ENCODE measurements at regions of chr1 and their contacts with region 1.

Region 1: GRCh38 chr1:154198756-154199562 is 7.1 kb upstream of the TPM3 start:
- DNase-seq: peak; percentile 70
- ATAC-seq: peak; percentile 76
- H3K4me3 Mint-ChIP-seq: no peak overlapping the region
- H3K27ac Mint-ChIP-seq: no peak overlapping the region
- H3K4me1 Mint-ChIP-seq: peaks cover 5% of the 10 kb centered on the region
- H3K27me3 Mint-ChIP-seq: peaks cover 12% of the 10 kb centered on the region

Region 2: DNA sequence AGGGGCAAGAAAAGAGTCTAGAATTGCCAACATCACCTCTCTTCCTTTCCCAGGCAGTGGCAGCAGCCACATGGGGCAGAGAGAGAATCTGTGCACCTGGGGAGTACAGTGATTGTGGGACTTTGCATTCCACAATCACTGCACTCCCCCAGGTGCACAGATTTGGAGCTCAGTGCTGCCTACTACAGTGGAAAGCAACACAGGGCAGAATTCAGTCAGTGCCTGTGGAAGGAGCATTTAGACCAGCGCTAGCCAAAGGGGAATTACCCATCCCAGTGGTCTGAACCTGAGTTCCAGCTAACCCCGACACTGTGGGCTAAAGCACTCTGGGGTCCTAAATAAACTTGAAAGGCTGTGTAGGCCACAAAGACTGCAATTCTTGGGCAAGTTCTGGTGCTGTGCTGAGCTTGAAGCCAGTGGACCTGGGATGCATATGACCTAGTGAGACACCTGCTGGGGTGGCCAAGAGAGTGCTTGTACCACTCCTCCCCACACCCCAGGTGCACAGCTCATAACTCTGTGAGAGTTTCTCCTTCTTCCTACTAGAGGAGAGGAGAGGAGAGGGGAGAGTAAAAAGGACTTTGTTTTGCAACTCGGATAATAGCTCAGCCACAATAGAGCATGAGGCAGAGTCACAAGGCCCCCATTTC is 94.4 kb before region 1 on chr1:
- CTCF ChIA-PET with region 1: no interaction called
- POLR2A ChIA-PET with region 1: no interaction called
- DNase-seq: no peak
- ATAC-seq: no peak
- H3K4me3 Mint-ChIP-seq: no peak overlapping the region
- H3K27ac Mint-ChIP-seq: no peak overlapping the region
- H3K4me1 Mint-ChIP-seq: no peaks in the 10 kb centered on the region
- H3K27me3 Mint-ChIP-seq: no peaks in the 10 kb centered on the region

Region 3: GRCh38 chr1:154170547-154171222 is 28.3 kb before region 1 on chr1:
- CTCF ChIA-PET with region 1: no interaction called
- POLR2A ChIA-PET with region 1: no interaction called
- DNase-seq: no peak
- ATAC-seq: peak; percentile 50
- H3K4me3 Mint-ChIP-seq: no peak overlapping the region
- H3K27ac Mint-ChIP-seq: peak overlapping the region; percentile 43
- H3K4me1 Mint-ChIP-seq: peaks cover 34% of the 10 kb centered on the region
- H3K27me3 Mint-ChIP-seq: no peaks in the 10 kb centered on the region

Region 4: GRCh38 chr1:154183045-154183915 is 15.7 kb before region 1 on chr1:
- CTCF ChIA-PET with region 1: interaction called, 14 read pairs
- POLR2A ChIA-PET with region 1: interaction called, 5 read pairs
- DNase-seq: peak; percentile 97
- ATAC-seq: peak; percentile 72
- H3K4me3 Mint-ChIP-seq: peak overlapping the region; percentile 99
- H3K27ac Mint-ChIP-seq: peak overlapping the region; percentile 100
- H3K4me1 Mint-ChIP-seq: peaks cover 43% of the 10 kb centered on the region
- H3K27me3 Mint-ChIP-seq: peaks cover 6% of the 10 kb centered on the region

Region 5: GRCh38 chr1:154213274-154213673 is 14.3 kb after region 1 on chr1:
- CTCF ChIA-PET with region 1: interaction called, 39 read pairs
- POLR2A ChIA-PET with region 1: interaction called, 5 read pairs
- DNase-seq: no peak
- ATAC-seq: no peak
- H3K4me3 Mint-ChIP-seq: no peak overlapping the region
- H3K27ac Mint-ChIP-seq: no peak overlapping the region
- H3K4me1 Mint-ChIP-seq: peaks cover 25% of the 10 kb centered on the region
- H3K27me3 Mint-ChIP-seq: no peaks in the 10 kb centered on the region

Region 6: GRCh38 chr1:154220071-154220969 is 21.4 kb after region 1 on chr1 and contains the start of gene UBAP2L:
- CTCF ChIA-PET with region 1: interaction called, 39 read pairs
- POLR2A ChIA-PET with region 1: interaction called, 5 read pairs
- DNase-seq: peak; percentile 99
- ATAC-seq: peak; percentile 88
- H3K4me3 Mint-ChIP-seq: peak within 1 kb of the TSS; percentile 99
- H3K27ac Mint-ChIP-seq: peak within 1 kb of the TSS; percentile 98
- H3K4me1 Mint-ChIP-seq: peaks cover 62% of the 10 kb centered on the region
- H3K27me3 Mint-ChIP-seq: no peaks in the 10 kb centered on the region
- total RNA-seq, gene UBAP2L: 176 to 179 TPM

Region 7: DNA sequence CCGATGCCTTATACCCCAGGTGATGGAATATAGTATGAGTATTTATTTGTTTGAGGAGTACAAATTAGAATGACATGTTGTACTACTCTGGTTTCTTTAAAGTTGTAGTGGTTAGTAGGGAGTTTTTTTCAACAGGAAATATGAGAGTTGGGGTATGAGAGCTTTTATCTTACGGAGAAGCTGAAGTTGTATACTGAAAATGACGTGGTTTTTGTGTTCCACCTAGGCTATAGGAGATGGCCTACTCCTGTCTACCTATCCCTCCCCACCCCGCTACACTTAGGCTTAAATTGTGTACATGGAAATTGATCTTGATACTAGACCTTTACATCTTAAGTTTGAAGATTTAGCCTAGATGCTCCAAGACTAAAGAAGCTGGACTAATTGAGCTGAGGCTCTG is 66.6 kb after region 1 on chr1:
- CTCF ChIA-PET with region 1: interaction called, 60 read pairs
- POLR2A ChIA-PET with region 1: interaction called, 3 read pairs
- DNase-seq: no peak
- ATAC-seq: peak; percentile 84
- H3K4me3 Mint-ChIP-seq: peak overlapping the region; percentile 6
- H3K27ac Mint-ChIP-seq: peak overlapping the region; percentile 82
- H3K4me1 Mint-ChIP-seq: peaks cover 41% of the 10 kb centered on the region
- H3K27me3 Mint-ChIP-seq: no peaks in the 10 kb centered on the region

Region 8: GRCh38 chr1:154272217-154272998 is 73.4 kb after region 1 on chr1 and contains the start of gene HAX1:
- CTCF ChIA-PET with region 1: interaction called, 60 read pairs
- POLR2A ChIA-PET with region 1: no interaction called
- DNase-seq: peak; percentile 99
- ATAC-seq: peak; percentile 96
- H3K4me3 Mint-ChIP-seq: peak within 1 kb of the TSS; percentile 97
- H3K27ac Mint-ChIP-seq: peak within 1 kb of the TSS; percentile 96
- H3K4me1 Mint-ChIP-seq: peaks cover 41% of the 10 kb centered on the region
- H3K27me3 Mint-ChIP-seq: no peaks in the 10 kb centered on the region
- total RNA-seq, gene HAX1: 110 to 119 TPM

Region 9: DNA sequence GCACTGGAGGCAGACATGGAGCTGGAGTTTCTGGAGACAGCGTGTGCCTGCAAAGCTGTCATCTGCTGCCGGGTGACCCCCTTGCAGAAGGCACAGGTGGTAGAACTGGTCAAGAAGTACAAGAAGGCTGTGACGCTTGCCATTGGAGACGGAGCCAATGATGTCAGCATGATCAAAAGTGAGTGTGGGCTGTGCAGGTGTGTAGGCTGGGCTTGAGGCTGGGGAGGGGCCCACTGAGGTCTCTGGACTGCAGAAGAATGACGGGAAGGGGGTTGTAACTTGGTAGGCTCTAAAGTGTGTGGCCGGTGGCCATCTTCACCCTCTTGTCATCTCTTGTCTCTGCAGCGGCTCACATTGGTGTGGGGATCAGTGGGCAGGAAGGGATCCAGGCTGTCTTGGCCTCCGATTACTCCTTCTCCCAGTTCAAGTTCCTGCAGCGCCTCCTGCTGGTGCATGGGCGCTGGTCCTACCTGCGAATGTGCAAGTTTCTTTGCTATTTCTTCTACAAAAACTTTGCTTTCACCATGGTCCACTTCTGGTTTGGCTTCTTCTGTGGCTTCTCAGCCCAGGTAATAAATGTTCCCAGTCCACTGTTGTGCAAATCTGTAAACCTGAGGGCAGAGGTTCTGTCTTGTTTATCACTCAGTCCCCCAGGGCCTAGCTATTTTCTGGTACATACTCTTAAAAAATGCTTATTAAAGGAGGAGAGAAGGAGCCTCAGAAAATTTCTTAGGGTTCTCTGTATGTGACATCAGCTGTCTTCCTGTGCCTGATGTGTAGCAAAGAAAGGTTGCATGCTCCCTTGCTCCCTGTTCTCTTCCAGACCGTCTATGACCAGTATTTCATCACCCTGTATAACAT is 146.2 kb after region 1 on chr1:
- CTCF ChIA-PET with region 1: interaction called, 15 read pairs
- POLR2A ChIA-PET with region 1: interaction called, 3 read pairs
- DNase-seq: peak; percentile 77
- ATAC-seq: no peak
- H3K4me3 Mint-ChIP-seq: no peak overlapping the region
- H3K27ac Mint-ChIP-seq: no peak overlapping the region
- H3K4me1 Mint-ChIP-seq: peaks cover 60% of the 10 kb centered on the region
- H3K27me3 Mint-ChIP-seq: no peaks in the 10 kb centered on the region

Region 10: DNA sequence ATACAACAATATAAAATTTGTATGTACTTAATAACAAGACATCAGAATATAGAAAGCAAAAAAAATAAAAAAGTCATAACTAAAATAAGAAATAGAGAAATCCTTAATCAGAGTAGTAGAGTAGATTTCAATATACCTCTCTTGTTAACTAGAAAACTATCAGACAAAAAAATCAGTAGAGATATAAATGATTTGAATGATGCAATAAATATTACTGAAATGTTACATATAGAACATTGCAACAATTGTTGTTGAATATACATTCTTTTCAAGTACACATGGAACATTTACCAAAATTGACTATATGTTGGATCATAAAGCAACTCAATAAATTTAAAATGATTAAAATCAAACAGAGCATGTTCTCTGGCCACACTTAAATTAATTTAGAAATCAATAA is 440.9 kb after region 1 on chr1:
- CTCF ChIA-PET with region 1: no interaction called
- POLR2A ChIA-PET with region 1: no interaction called
- DNase-seq: no peak
- ATAC-seq: no peak
- H3K4me3 Mint-ChIP-seq: no peak overlapping the region
- H3K27ac Mint-ChIP-seq: no peak overlapping the region
- H3K4me1 Mint-ChIP-seq: no peaks in the 10 kb centered on the region
- H3K27me3 Mint-ChIP-seq: peaks cover 45% of the 10 kb centered on the region